ENCODE measurements at regions of chr1 and their contacts with region 1.

Region 1: GRCh38 chr1:19974822-19975416 is 4.5 kb downstream of the PLA2G2A start:
- DNase-seq: peak; percentile 67
- H3K4me3 Mint-ChIP-seq: no peak overlapping the region
- H3K27ac Mint-ChIP-seq: no peak overlapping the region
- H3K4me1 Mint-ChIP-seq: peaks cover 4% of the 10 kb centered on the region
- H3K27me3 Mint-ChIP-seq: peaks cover 34% of the 10 kb centered on the region
- CTCF ChIP-seq: peak; percentile 83

Region 2: GRCh38 chr1:19735440-19736127 is 239.3 kb before region 1 on chr1:
- CTCF ChIA-PET with region 1: no interaction called
- POLR2A ChIA-PET with region 1: no interaction called
- intact Hi-C with region 1: no loop called
- DNase-seq: peak; percentile 78
- H3K4me3 Mint-ChIP-seq: no peak overlapping the region
- H3K27ac Mint-ChIP-seq: no peak overlapping the region
- H3K4me1 Mint-ChIP-seq: peaks cover 7% of the 10 kb centered on the region
- H3K27me3 Mint-ChIP-seq: no peaks in the 10 kb centered on the region
- CTCF ChIP-seq: no peak

Region 3: DNA sequence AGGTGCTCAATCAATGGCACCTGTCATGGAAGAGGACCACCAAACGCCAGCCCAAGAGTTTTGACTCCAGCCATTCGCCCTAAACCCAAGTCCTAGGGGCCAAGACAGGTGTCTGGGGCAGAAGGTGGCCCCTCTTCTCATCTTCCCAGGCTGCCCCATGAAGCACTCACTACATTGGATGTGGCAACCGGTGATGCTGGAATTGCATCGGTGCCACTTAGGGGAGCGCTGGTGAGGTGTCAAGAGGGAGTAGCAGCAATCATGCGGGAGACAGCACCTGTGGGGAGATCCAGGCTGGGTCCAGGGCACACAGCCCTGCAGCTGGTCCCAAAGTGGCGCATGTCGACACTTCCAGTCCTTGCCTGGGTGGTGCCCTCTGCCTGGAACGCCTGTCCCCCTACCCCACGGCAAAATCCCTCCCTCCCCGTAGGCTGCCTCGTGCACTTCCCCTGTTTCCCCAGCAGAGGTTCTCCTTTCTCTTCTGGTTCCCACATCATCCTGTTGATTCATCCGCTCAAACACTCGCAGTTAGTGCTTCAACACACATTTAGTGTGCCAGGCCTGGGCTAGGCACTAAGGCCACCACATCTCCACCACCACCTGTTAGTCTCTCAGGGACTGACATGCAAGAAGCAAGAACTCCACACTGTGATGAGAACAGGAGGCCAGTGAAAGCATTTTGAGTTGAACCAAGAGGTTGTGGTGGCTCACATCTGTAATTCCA is 125.9 kb after region 1 on chr1:
- CTCF ChIA-PET with region 1: interaction called, 5 read pairs
- POLR2A ChIA-PET with region 1: interaction called, 3 read pairs
- intact Hi-C with region 1: loop called (anchors 10 kb)
- DNase-seq: peak; percentile 61
- H3K4me3 Mint-ChIP-seq: no peak overlapping the region
- H3K27ac Mint-ChIP-seq: no peak overlapping the region
- H3K4me1 Mint-ChIP-seq: peaks cover 12% of the 10 kb centered on the region
- H3K27me3 Mint-ChIP-seq: no peaks in the 10 kb centered on the region
- CTCF ChIP-seq: peak; percentile 92

Region 4: GRCh38 chr1:20194757-20195461 is 220.0 kb after region 1 on chr1:
- CTCF ChIA-PET with region 1: interaction called, 4 read pairs
- POLR2A ChIA-PET with region 1: no interaction called
- intact Hi-C with region 1: loop called (anchors 2 kb)
- DNase-seq: peak; percentile 68
- H3K4me3 Mint-ChIP-seq: no peak overlapping the region
- H3K27ac Mint-ChIP-seq: no peak overlapping the region
- H3K4me1 Mint-ChIP-seq: peaks cover 31% of the 10 kb centered on the region
- H3K27me3 Mint-ChIP-seq: no peaks in the 10 kb centered on the region
- CTCF ChIP-seq: peak; percentile 59

Measured in MCF 10A (cell line).